ENCODE measurements at regions of chr1 and their contacts with region 1.

Region 1: GRCh38 chr1:110034451-110035235 is at the start of gene STRIP1:
- DNase-seq: peak; percentile 96
- H3K4me3 Mint-ChIP-seq: peak within 1 kb of the TSS; percentile 93
- H3K27ac Mint-ChIP-seq: peak within 1 kb of the TSS; percentile 89
- H3K4me1 Mint-ChIP-seq: peaks cover 63% of the 10 kb centered on the region
- H3K27me3 Mint-ChIP-seq: no peaks in the 10 kb centered on the region

Region 2: GRCh38 chr1:110019770-110020169 is 14.9 kb before region 1 on chr1:
- CTCF ChIA-PET with region 1: interaction called, 19 read pairs
- DNase-seq: no peak
- H3K4me3 Mint-ChIP-seq: no peak overlapping the region
- H3K27ac Mint-ChIP-seq: no peak overlapping the region
- H3K4me1 Mint-ChIP-seq: no peaks in the 10 kb centered on the region
- H3K27me3 Mint-ChIP-seq: no peaks in the 10 kb centered on the region

Region 3: DNA sequence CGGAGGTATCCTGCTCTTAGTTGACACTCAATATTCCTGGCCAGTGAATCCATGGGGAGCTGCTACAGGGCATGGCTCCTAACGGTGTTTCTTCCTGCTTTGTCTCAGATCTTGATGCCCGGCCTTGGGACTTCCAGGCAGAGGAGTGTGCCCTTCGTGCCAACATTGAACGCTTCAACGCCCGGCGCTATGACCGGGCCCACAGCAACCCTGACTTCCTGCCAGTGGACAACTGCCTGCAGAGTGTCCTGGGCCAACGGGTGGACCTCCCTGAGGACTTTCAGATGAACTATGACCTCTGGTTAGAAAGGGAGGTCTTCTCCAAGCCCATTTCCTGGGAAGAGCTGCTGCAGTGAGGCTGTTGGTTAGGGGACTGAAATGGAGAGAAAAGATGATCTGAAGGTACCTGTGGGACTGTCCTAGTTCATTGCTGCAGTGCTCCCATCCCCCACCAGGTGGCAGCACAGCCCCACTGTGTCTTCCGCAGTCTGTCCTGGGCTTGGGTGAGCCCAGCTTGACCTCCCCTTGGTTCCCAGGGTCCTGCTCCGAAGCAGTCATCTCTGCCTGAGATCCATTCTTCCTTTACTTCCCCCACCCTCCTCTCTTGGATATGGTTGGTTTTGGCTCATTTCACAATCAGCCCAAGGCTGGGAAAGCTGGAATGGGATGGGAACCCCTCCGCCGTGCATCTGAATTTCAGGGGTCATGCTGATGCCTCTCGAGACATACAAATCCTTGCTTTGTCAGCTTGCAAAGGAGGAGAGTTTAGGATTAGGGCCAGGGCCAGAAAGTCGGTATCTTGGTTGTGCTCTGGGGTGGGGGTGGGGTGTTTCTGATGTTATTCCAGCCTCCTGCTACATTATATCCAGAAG is 19.1 kb after region 1 on chr1:
- CTCF ChIA-PET with region 1: interaction called, 10 read pairs
- DNase-seq: peak; percentile 79
- H3K4me3 Mint-ChIP-seq: no peak overlapping the region
- H3K27ac Mint-ChIP-seq: no peak overlapping the region
- H3K4me1 Mint-ChIP-seq: no peaks in the 10 kb centered on the region
- H3K27me3 Mint-ChIP-seq: no peaks in the 10 kb centered on the region

Region 4: GRCh38 chr1:110060034-110060661 is 25.5 kb after region 1 on chr1:
- CTCF ChIA-PET with region 1: interaction called, 11 read pairs
- DNase-seq: peak; percentile 81
- H3K4me3 Mint-ChIP-seq: no peak overlapping the region
- H3K27ac Mint-ChIP-seq: no peak overlapping the region
- H3K4me1 Mint-ChIP-seq: no peaks in the 10 kb centered on the region
- H3K27me3 Mint-ChIP-seq: peaks cover 13% of the 10 kb centered on the region

Region 5: GRCh38 chr1:110106013-110106941 is 71.6 kb after region 1 on chr1:
- CTCF ChIA-PET with region 1: interaction called, 17 read pairs
- DNase-seq: peak; percentile 73
- H3K4me3 Mint-ChIP-seq: no peak overlapping the region
- H3K27ac Mint-ChIP-seq: no peak overlapping the region
- H3K4me1 Mint-ChIP-seq: no peaks in the 10 kb centered on the region
- H3K27me3 Mint-ChIP-seq: peaks cover 39% of the 10 kb centered on the region